ENCODE measurements at regions of chr17 and their contacts with region 1.

Region 1: GRCh38 chr17:81954131-81955057 is 6.6 kb downstream of the NOTUM start:
- DNase-seq: no peak
- H3K4me3 ChIP-seq: no peak overlapping the region
- H3K27ac ChIP-seq: no peak overlapping the region
- H3K4me1 ChIP-seq: peaks cover 0 to 2% (median 0%) of the 10 kb centered on the region in 4 experiments; a peak in 1 of 7 replicates
- H3K27me3 ChIP-seq: peaks cover 17 to 39% (median 19%) of the 10 kb centered on the region in 4 experiments
- CTCF ChIP-seq: no peak
- EP300 ChIP-seq: no peak
- POLR2A ChIP-seq: no peak
- RAD21 ChIP-seq: no peak

Region 2: GRCh38 chr17:81636505-81637288 is 317.7 kb before region 1 on chr17 and contains the starts of genes NPLOC4 and TSPAN10:
- CTCF ChIA-PET with region 1: no interaction called
- POLR2A ChIA-PET with region 1: no interaction called
- DNase-seq: peak; percentile 58 to 94
- H3K4me3 ChIP-seq: peak within 1 kb of the TSS; percentile 78 to 96 (median 87)
- H3K27ac ChIP-seq: peak within 1 kb of the TSS; percentile 83
- H3K4me1 ChIP-seq: no peaks in the 10 kb centered on the region
- H3K27me3 ChIP-seq: no peaks in the 10 kb centered on the region
- CTCF ChIP-seq: no peak
- EP300 ChIP-seq: peak in 1 of 2 experiments; percentile 71; a peak in 1 of 3 replicates
- POLR2A ChIP-seq: peak in 1 of 2 experiments; percentile 92; a peak in 2 of 3 replicates
- RAD21 ChIP-seq: no peak; a peak in 1 of 4 replicates
- total RNA-seq, gene NPLOC4: 79.8 and 92.7 TPM in 2 replicates
- total RNA-seq, gene TSPAN10: 0.96 and 0.99 TPM in 2 replicates

Region 3: GRCh38 chr17:81667754-81668153 is 286.6 kb before region 1 on chr17:
- CTCF ChIA-PET with region 1: no interaction called
- POLR2A ChIA-PET with region 1: no interaction called
- DNase-seq: no peak
- H3K4me3 ChIP-seq: peak overlapping the region in 2 of 4 experiments; percentile 10 to 88; a peak in 2 of 8 replicates
- H3K27ac ChIP-seq: no peak overlapping the region
- H3K4me1 ChIP-seq: peaks cover 3 to 11% (median 8%) of the 10 kb centered on the region in 4 experiments
- H3K27me3 ChIP-seq: no peaks in the 10 kb centered on the region
- CTCF ChIP-seq: peak; percentile 35 to 60 (median 45); a peak in 3 of 4 replicates
- EP300 ChIP-seq: no peak
- POLR2A ChIP-seq: no peak
- RAD21 ChIP-seq: peak in 1 of 2 experiments; percentile 27; a peak in 1 of 4 replicates

Region 4: GRCh38 chr17:81821603-81822311 is 132.6 kb before region 1 on chr17:
- CTCF ChIA-PET with region 1: no interaction called
- POLR2A ChIA-PET with region 1: no interaction called
- DNase-seq: peak in 1 of 2 experiments; percentile 80
- H3K4me3 ChIP-seq: no peak overlapping the region
- H3K27ac ChIP-seq: no peak overlapping the region
- H3K4me1 ChIP-seq: peaks cover 0 to 16% (median 9%) of the 10 kb centered on the region in 4 experiments; a peak in 6 of 7 replicates
- H3K27me3 ChIP-seq: no peaks in the 10 kb centered on the region
- CTCF ChIP-seq: peak; percentile 45 to 50 (median 48)
- EP300 ChIP-seq: no peak
- POLR2A ChIP-seq: no peak
- RAD21 ChIP-seq: peak in 1 of 2 experiments; percentile 42; a peak in 2 of 4 replicates

Region 5: DNA sequence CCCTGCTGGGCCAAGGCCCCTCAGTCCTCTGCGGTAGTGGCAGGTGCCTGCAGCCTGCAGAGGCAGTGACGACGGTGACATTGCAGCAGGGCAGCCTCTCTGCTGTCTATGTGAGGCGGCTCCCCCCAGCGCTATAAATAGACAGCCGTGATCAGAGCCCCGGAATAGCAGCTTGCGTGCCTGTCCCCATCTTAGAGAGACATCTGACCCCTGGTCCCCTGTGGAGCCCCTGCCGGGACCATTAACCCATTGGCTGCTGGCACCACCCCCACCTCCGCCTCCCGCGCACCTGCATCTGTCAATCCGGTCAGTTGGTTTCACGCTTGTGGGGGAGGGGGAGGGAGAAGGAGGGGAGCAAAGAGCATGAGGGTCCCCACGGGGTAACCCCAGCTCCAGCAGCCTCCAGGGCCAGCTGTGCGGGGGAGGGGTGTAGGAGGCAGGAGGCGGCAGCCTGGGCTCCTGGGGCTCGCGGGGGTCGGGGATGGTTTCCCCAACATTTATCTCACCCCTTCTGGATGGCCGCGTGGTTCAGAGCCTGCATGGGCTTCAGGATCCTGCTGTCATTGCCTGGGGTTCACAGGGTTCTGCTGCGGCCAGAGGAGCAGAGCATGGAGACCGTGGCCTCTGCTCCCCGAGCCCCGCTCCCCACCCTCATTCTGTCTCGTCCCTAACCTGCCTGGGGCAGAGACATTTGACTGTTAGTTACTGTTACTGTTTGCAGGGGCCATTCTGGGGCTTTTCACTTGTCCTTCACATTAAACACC is 12.4 kb before region 1 on chr17:
- CTCF ChIA-PET with region 1: interaction called, 5 read pairs
- POLR2A ChIA-PET with region 1: interaction called, 14 read pairs
- DNase-seq: no peak
- H3K4me3 ChIP-seq: peak overlapping the region in 1 of 4 experiments; percentile 39; a peak in 2 of 8 replicates
- H3K27ac ChIP-seq: no peak overlapping the region
- H3K4me1 ChIP-seq: peaks cover 0 to 12% (median 7%) of the 10 kb centered on the region in 4 experiments; a peak in 5 of 7 replicates
- H3K27me3 ChIP-seq: peaks cover 0 to 5% (median 0%) of the 10 kb centered on the region in 4 experiments; a peak in 3 of 7 replicates
- CTCF ChIP-seq: no peak
- EP300 ChIP-seq: no peak
- POLR2A ChIP-seq: no peak
- RAD21 ChIP-seq: no peak

Region 6: GRCh38 chr17:82077617-82078358 is 123.4 kb after region 1 on chr17:
- CTCF ChIA-PET with region 1: no interaction called
- POLR2A ChIA-PET with region 1: no interaction called
- DNase-seq: no peak
- H3K4me3 ChIP-seq: no peak overlapping the region
- H3K27ac ChIP-seq: no peak overlapping the region
- H3K4me1 ChIP-seq: no peaks in the 10 kb centered on the region
- H3K27me3 ChIP-seq: no peaks in the 10 kb centered on the region; a peak in 1 of 7 replicates
- CTCF ChIP-seq: peak; percentile 26 to 44 (median 33)
- EP300 ChIP-seq: no peak
- POLR2A ChIP-seq: no peak
- RAD21 ChIP-seq: peak in 1 of 2 experiments; percentile 39; a peak in 3 of 4 replicates

Measured in H1 (cell line).